ENCODE measurements at regions of chr15 and their contacts with region 1.

Region 1: GRCh38 chr15:60798821-60799220 is 319.9 kb upstream of the ICE2 start:
- DNase-seq: peak; percentile 96
- H3K4me3 ChIP-seq: no peak overlapping the region
- H3K27ac ChIP-seq: peak overlapping the region; percentile 83
- H3K4me1 ChIP-seq: peaks cover 39% of the 10 kb centered on the region
- H3K27me3 ChIP-seq: no peaks in the 10 kb centered on the region

Region 2: DNA sequence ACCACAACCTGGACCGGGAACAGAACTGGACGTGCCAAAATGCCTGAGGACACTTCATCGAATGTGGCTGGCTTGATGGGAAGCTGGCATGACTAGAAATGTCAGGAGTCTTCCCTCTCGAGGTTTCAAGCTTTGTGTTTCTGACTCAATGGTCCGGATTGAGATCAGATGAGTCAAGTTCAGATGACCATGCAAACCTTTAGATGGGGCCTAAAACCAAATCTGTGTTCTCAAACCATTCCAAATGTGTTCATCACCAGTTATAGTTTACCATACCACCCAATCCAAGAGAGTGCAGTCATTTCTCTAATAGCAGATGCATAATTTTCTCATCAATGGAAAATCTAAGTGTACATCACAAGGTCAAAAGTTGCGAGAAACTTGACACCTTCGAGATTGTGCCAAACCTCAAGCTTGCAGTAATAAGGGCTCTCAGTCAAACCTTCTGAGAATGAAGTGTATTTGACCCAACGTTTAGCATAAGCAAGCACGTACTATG is 61.2 kb after region 1 on chr15:
- in situ Hi-C with region 1: loop called (anchors 10 kb)
- DNase-seq: peak; percentile 91
- H3K4me3 ChIP-seq: no peak overlapping the region
- H3K27ac ChIP-seq: peak overlapping the region; percentile 52
- H3K4me1 ChIP-seq: peaks cover 11% of the 10 kb centered on the region
- H3K27me3 ChIP-seq: no peaks in the 10 kb centered on the region

Region 3: GRCh38 chr15:61421938-61422337 is 623.1 kb after region 1 on chr15:
- in situ Hi-C with region 1: no loop called
- DNase-seq: no peak
- H3K4me3 ChIP-seq: no peak overlapping the region
- H3K27ac ChIP-seq: no peak overlapping the region
- H3K4me1 ChIP-seq: no peaks in the 10 kb centered on the region
- H3K27me3 ChIP-seq: peaks cover 14% of the 10 kb centered on the region; the same call in 1 of the 2 replicates

Measured in GM23248 (cell line).